Left ventricle myocardium superior (tissue), 1 donor: ENCODE measurements at regions of chr5 and their contacts with region 1.

Region 1: GRCh38 chr5:39566891-39567290 is 142.1 kb upstream of the DAB2 start:
- DNase-seq: peak; percentile 37
- ATAC-seq: no peak

Region 2: DNA sequence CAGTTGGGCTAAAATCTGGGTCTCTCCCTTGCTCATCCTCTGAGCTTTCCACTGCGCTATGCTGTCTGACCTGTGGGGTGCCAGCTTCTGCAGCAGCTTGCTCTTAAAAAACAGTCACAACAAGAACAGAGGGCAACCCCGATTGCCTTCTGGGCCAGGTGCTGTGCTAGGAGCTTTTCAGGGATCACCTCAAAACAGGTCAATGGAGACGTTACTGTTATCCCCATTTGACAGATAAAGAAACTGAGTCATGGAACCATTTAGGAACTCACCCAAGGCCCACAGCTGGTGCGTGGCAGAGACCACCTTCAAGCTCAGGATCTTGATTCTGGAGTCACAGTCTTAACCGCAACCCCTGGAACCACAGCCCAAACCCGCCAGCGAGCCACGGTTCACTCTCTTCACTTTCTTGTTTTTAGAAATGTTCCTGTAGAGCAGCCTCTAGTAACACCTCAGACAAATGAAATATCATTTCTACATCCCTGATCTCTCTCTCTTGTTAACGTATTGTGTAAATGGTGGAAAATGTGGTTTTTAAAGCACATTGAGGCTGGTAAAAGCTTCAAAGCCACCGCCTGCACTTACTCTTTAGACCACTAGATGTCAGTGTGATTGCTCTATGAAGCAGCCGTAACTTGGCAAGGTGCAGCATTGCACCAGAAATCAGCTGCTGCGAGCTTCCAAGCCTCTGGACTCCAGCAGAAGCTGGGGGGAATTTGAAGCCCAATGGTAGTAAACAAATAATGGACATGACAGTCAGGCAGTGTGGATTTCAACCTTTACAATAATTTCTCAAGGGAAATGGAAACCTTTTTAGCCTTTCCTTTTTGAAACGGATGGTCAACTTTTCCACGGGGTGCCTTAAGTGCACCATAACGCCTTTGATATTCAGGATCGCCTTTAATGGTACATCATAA is 349.3 kb before region 1 on chr5:
- intact Hi-C with region 1: loop called (anchors 10 kb)
- DNase-seq: peak; percentile 71
- ATAC-seq: peak; percentile 80

Region 3: GRCh38 chr5:39640552-39640951 is 73.7 kb after region 1 on chr5:
- intact Hi-C with region 1: no loop called
- DNase-seq: no peak
- ATAC-seq: no peak

Region 4: GRCh38 chr5:39986618-39987017 is 419.7 kb after region 1 on chr5:
- intact Hi-C with region 1: no loop called
- DNase-seq: no peak
- ATAC-seq: no peak